Natural killer cell (primary cell): ENCODE measurements at regions of chr17 and their contacts with region 1.

Region 1: DNA sequence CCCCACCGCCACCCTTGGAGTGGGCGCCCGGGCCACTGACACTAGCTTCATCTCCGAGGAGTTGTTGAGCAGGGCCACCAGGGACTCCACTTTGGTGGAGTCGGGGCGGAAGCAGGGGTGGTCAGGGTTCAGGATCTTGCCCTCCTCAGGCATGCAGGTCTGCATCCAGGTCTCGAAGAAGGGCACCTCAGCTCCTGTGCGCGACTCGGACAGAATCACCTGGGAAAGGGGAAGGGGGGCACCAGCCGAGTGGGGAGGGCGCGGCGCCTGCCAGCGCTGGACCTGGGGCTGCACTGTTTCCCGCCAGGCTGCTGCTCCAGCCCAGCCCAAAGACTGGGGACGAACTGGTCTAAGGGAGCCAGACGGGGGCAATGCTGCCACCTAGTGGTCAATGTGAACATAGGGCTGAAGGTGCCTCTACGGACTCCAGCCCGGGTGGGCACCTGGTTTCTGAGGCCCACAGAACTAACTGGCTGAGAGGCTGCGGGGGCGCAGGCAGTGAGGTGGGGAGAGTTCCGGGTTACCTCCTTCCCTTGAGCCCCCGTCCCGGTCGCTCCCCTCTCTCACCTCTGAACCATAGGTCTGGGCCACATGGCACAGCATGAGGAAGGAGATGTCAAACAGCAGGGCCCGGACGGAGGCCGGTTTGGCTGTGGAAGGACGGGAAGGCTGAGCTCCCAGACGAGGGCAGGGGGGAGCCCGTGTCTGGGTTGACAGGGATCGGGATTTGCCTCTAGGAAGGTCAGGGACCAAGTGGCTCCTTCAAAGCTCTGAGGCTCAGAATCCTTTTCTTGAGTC is 11.8 kb downstream of the CSF3 start:
- DNase-seq: peak; percentile 71 to 91
- ATAC-seq: peak; percentile 87 to 97 (median 93)
- H3K4me3 ChIP-seq: no peak overlapping the region
- H3K4me3 Mint-ChIP-seq: no peak overlapping the region
- H3K27ac ChIP-seq: no peak overlapping the region
- H3K27ac Mint-ChIP-seq: no peak overlapping the region
- H3K4me1 ChIP-seq: peaks cover 17% of the 10 kb centered on the region
- H3K4me1 Mint-ChIP-seq: peaks cover 11 to 14% of the 10 kb centered on the region in 2 donors
- H3K27me3 ChIP-seq: no peaks in the 10 kb centered on the region
- H3K27me3 Mint-ChIP-seq: no peaks in the 10 kb centered on the region
- CTCF ChIP-seq: peak; percentile 94

Region 2: DNA sequence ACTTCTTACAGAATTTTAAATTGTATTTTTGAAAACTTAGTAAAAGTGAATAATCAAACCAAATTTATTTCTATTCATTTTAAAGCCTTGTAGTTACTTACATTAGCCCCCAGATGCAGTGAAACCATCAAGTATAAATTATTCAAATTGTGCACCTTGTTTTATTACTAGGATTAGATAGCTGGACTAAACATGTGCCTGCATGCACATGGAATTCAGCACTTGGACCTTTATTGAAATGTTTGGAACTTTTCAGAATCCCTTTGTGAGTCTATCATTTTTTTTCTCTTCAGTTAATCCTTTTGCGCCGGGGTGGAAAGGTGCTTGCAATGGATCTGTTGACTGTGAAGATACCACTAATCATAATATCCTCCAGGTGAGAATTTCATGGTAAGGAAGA is 154.3 kb before region 1 on chr17:
- intact Hi-C with region 1: loop called (anchors 1 kb)
- DNase-seq: peak in 1 of 2 donors; percentile 61
- ATAC-seq: peak in 1 of 3 donors; percentile 68
- H3K4me3 ChIP-seq: no peak overlapping the region
- H3K4me3 Mint-ChIP-seq: no peak overlapping the region
- H3K27ac ChIP-seq: no peak overlapping the region
- H3K27ac Mint-ChIP-seq: no peak overlapping the region
- H3K4me1 ChIP-seq: peaks cover 9% of the 10 kb centered on the region
- H3K4me1 Mint-ChIP-seq: peaks cover 0 to 4% of the 10 kb centered on the region in 2 donors
- H3K27me3 ChIP-seq: peaks cover 4% of the 10 kb centered on the region
- H3K27me3 Mint-ChIP-seq: peaks cover 3 to 5% of the 10 kb centered on the region in 2 donors
- CTCF ChIP-seq: peak; percentile 63

Region 3: GRCh38 chr17:39889200-39889599 is 137.8 kb before region 1 on chr17:
- intact Hi-C with region 1: no loop called
- DNase-seq: no peak
- ATAC-seq: no peak
- H3K4me3 ChIP-seq: no peak overlapping the region
- H3K4me3 Mint-ChIP-seq: no peak overlapping the region
- H3K27ac ChIP-seq: no peak overlapping the region
- H3K27ac Mint-ChIP-seq: no peak overlapping the region
- H3K4me1 ChIP-seq: no peaks in the 10 kb centered on the region
- H3K4me1 Mint-ChIP-seq: no peaks in the 10 kb centered on the region
- H3K27me3 ChIP-seq: no peaks in the 10 kb centered on the region
- H3K27me3 Mint-ChIP-seq: no peaks in the 10 kb centered on the region
- CTCF ChIP-seq: no peak

Region 4: GRCh38 chr17:40056379-40057010 is 29.5 kb after region 1 on chr17:
- intact Hi-C with region 1: loop called (anchors 1 kb)
- DNase-seq: no peak
- ATAC-seq: no peak
- H3K4me3 ChIP-seq: no peak overlapping the region
- H3K4me3 Mint-ChIP-seq: no peak overlapping the region
- H3K27ac ChIP-seq: no peak overlapping the region
- H3K27ac Mint-ChIP-seq: no peak overlapping the region
- H3K4me1 ChIP-seq: peaks cover 14% of the 10 kb centered on the region
- H3K4me1 Mint-ChIP-seq: peaks cover 13 to 18% of the 10 kb centered on the region in 2 donors
- H3K27me3 ChIP-seq: no peaks in the 10 kb centered on the region
- H3K27me3 Mint-ChIP-seq: peaks cover 0 to 2% of the 10 kb centered on the region in 2 donors
- CTCF ChIP-seq: no peak

Region 5: GRCh38 chr17:40075201-40075941 is 48.4 kb after region 1 on chr17:
- intact Hi-C with region 1: no loop called
- DNase-seq: peak; percentile 62 to 84
- ATAC-seq: peak; percentile 88 to 93 (median 93)
- H3K4me3 ChIP-seq: no peak overlapping the region
- H3K4me3 Mint-ChIP-seq: peak overlapping the region; percentile 28
- H3K27ac ChIP-seq: peak overlapping the region; percentile 26
- H3K27ac Mint-ChIP-seq: peak overlapping the region in 1 of 2 donors; percentile 74
- H3K4me1 ChIP-seq: peaks cover 38% of the 10 kb centered on the region
- H3K4me1 Mint-ChIP-seq: peaks cover 24 to 55% of the 10 kb centered on the region in 2 donors
- H3K27me3 ChIP-seq: no peaks in the 10 kb centered on the region
- H3K27me3 Mint-ChIP-seq: no peaks in the 10 kb centered on the region
- CTCF ChIP-seq: peak; percentile 94